ENCODE measurements at regions of chr3 and their contacts with region 1.

Region 1: DNA sequence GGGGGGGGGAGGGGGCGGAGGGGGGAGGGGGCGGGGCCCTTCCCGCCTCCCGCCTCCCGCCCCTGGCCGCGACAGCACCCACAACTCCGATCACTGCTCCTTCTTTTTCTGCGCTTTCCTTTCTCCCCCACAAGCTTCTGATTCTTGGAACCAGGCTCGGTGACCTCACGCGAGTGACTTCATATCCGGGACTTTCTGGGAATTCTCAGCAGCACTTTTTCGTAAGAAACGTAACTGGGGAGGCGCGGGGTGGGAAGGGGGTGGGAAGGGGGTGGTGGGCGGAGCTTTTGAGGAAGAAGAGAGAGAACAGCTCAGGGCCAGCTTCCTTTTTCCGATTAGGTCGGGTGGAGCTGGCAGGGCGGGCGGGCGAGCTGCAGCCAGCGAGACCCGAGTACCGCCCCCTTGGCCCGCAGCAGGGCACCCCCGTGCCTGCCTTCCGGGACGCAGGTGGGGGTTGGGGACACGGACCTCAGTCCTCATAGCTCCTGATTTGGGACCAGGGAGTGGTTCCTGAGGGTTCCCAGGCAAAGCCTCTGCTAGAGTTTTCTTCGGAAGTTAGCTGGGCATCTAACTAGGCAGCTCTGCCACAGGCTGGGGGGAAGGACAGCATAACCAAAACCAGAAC is 14.6 kb downstream of the XIRP1 start:
- DNase-seq: peak; percentile 81 to 90
- H3K4me3 ChIP-seq: peak overlapping the region; percentile 35 to 59 (median 56)
- H3K27ac ChIP-seq: peak overlapping the region; percentile 93 to 98
- H3K4me1 ChIP-seq: peaks cover 0 to 7% of the 10 kb centered on the region in 2 donors
- H3K27me3 ChIP-seq: no peaks in the 10 kb centered on the region
- CTCF ChIP-seq: no peak
- POLR2A ChIP-seq: peak; percentile 40

Region 2: GRCh38 chr3:39150799-39151631 is 26.8 kb before region 1 on chr3:
- intact Hi-C with region 1: loop called (anchors 2 kb)
- DNase-seq: peak; percentile 87 to 88
- H3K4me3 ChIP-seq: peak overlapping the region; percentile 89 to 99 (median 94)
- H3K27ac ChIP-seq: peak overlapping the region; percentile 100
- H3K4me1 ChIP-seq: peaks cover 14 to 39% of the 10 kb centered on the region in 2 donors
- H3K27me3 ChIP-seq: no peaks in the 10 kb centered on the region
- CTCF ChIP-seq: no peak
- POLR2A ChIP-seq: no peak

Measured in breast epithelium (tissue), 4 donors.